ENCODE measurements at regions of chr18 and their contacts with region 1.

Region 1: DNA sequence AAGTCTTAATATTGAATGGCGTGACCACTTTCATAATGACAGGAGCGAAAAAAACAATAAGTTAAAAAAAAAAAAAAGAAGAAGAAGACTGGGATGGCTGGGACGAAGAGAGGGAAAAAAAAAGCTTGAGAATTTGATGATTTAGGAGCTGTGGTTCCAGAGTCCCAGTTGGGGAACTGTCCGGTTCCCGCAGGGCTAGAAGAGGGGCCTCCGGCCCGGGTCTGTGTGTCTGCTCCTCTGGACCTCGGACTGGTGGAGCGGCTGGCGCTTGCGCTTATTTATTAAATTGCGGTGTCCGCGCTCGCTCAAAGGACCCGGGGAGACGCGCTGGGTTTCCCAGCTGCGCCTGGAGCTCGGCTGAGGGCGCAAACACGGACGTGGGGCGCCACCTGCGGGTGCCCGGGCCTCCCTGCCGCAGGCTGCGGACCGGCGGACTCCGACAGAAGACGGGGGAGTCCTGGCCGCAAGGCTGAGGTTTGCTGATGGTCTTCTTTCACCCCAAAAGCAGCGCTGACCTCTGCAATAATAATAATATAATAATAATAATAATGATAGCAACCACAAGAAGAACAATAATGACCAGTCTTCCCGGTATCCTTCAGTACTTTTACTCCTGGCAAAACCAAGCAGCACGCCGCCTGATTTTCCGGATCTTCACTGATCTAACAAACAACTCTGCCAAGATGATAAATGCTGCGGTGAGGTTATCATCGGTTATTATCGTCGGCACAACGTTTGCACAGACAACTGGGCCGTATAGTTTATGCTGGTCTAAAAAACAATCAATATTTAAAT is at the start of gene CBLN2:
- DNase-seq: peak; percentile 75
- H3K4me3 Mint-ChIP-seq: no peak within 1 kb of the TSS
- H3K27ac Mint-ChIP-seq: no peak within 1 kb of the TSS
- H3K4me1 Mint-ChIP-seq: peaks cover 3% of the 10 kb centered on the region
- H3K27me3 Mint-ChIP-seq: peaks cover 40% of the 10 kb centered on the region
- total RNA-seq, gene CBLN2: not detected in 2 replicates

Region 2: GRCh38 chr18:70931942-70932814 is 1612.1 kb before region 1 on chr18:
- intact Hi-C with region 1: loop called (anchors 10 kb)
- DNase-seq: no peak
- H3K4me3 Mint-ChIP-seq: no peak overlapping the region
- H3K27ac Mint-ChIP-seq: no peak overlapping the region
- H3K4me1 Mint-ChIP-seq: no peaks in the 10 kb centered on the region
- H3K27me3 Mint-ChIP-seq: no peaks in the 10 kb centered on the region

Region 3: DNA sequence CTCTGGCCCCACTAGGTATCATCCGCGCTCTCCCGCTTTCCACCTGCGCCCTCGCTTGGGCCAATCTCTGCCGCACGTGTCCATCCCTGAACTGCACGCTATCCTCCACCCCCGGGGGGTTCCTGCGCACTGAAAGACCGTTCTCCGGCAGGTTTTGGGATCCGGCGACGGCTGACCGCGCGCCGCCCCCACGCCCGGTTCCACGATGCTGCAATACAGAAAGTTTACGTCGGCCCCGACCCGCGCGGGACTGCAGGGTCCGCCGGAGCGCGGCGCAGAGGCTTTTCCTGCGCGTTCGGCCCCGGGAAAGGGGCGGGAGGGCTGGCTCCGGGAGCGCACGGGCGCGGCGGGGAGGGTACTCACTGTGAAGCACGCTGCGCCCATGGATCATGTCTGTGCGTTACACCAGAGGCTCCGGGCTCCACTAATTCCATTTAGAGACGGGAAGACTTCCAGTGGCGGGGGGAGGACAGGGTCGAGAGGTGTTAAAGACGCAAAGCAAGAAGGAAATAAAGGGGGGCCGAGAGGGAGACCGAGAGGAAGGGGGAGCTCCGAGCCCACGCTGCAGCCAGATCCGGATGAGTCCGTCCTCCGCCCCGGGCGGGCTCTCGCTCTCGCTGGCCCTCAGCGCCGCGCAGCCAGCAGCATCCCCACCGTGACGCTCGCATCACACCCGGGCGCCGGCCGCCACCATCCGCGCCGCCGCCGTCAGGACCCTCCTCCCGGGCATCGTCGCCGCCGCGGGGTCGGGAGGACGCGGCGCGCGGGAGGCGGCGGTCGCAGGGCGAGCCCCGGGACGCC is 322.8 kb after region 1 on chr18:
- intact Hi-C with region 1: loop called (anchors 5 kb)
- DNase-seq: no peak
- H3K4me3 Mint-ChIP-seq: no peak overlapping the region
- H3K27ac Mint-ChIP-seq: no peak overlapping the region
- H3K4me1 Mint-ChIP-seq: no peaks in the 10 kb centered on the region
- H3K27me3 Mint-ChIP-seq: peaks cover 35% of the 10 kb centered on the region